Left cardiac atrium (tissue), 4 donors: ENCODE measurements at regions of chr15 and their contacts with region 1.

Region 1: GRCh38 chr15:36501063-36501678 is 78.3 kb upstream of the CDIN1 start:
- DNase-seq: no peak
- ATAC-seq: peak; percentile 86 to 94

Region 2: GRCh38 chr15:35519541-35520149 is 981.5 kb before region 1 on chr15:
- intact Hi-C with region 1: loop called in 1 of 2 experiments (anchors 5 kb)
- DNase-seq: no peak
- ATAC-seq: peak; percentile 66 to 74

Region 3: GRCh38 chr15:36133742-36134141 is 367.4 kb before region 1 on chr15:
- intact Hi-C with region 1: no loop called
- DNase-seq: no peak
- ATAC-seq: no peak

Region 4: DNA sequence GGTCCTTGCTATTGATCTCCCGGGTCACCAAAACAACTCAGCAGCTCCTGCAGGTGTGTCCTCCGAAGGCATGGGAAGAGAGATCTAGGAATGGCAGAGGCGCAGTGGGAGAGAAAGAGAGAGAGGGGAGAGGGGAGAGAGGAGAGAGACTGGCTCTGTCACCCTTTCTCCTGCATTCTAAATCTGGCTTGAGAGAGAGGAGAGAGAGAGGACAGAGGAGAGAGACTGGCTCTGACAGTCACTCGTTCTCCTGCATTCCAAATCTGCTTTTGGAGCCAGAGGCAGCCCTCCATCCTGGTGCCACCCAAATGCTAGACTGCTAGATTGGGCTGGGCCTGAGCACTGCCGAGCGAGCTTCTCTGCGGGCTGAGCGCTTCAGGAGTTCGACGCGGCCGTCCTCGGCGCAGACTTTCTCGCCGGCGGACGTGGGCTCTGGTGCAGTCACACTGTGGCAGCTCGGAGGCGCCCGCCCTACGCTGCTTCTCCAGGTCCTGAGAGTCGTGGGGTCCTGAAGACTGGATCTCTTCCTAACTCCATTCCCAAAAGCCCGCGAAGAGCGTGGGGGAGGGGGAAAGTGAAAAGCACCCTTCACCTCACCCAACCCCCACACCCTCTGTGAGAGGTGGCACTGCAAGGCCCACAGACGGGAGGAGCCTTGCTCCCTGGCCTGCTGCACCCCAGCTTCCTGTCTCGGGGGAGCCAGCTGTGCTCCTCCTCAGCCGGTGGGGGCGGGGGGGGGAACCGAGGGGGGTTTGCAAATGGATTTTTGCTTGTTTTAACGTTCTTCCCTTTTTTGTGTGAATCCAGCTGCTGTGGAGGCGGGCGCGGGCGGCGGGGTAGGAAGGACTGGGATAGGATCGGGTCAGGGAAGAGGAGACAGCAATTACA is 376.9 kb after region 1 on chr15:
- intact Hi-C with region 1: loop called in 1 of 2 experiments (anchors 10 kb)
- DNase-seq: no peak
- ATAC-seq: peak; percentile 47 to 62

Region 5: GRCh38 chr15:37134699-37135131 is 633.5 kb after region 1 on chr15:
- intact Hi-C with region 1: loop called in 1 of 2 experiments (anchors 10 kb)
- DNase-seq: no peak
- ATAC-seq: peak in 1 of 2 donors; percentile 76